Psoas muscle (tissue), 8 donors: ENCODE measurements at regions of chr12 and their contacts with region 1.

Region 1: DNA sequence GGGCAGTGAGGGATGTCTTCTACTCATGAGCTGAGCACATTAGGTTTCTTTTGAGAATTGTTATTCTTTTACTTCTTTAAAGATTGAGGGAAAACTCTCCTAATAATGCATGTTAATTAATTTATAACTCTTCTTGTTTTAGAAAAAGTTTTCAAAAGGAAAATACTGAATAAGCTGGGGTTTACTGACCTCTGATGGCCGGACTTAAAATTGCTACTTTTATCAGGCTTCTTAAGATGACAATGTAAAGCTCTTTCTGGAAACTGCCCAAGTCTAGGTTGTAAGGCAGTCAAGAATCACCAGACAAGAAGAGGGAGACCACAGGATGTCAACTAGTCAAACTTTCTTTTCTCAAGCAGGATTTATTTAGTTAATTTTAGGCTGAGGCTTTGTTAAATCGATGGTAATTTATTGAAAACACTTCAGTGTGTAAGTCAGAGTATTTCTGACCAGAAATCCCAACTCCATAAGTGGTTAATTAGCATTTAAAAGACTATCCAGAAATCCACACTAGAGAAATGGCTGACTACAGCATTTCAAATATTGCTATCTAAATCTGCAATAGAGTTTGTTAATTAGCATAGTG is 82.1 kb downstream of the AVPR1A start:
- DNase-seq: no peak
- ATAC-seq: no peak
- H3K4me3 ChIP-seq: no peak overlapping the region
- H3K27ac ChIP-seq: no peak overlapping the region
- H3K4me1 ChIP-seq: no peaks in the 10 kb centered on the region
- H3K27me3 ChIP-seq: peaks cover 0 to 2% (median 0%) of the 10 kb centered on the region in 3 donors
- CTCF ChIP-seq: peak; percentile 27

Region 2: GRCh38 chr12:62772416-62772955 is 296.5 kb before region 1 on chr12:
- intact Hi-C with region 1: no loop called
- DNase-seq: no peak
- ATAC-seq: no peak
- H3K4me3 ChIP-seq: no peak overlapping the region
- H3K27ac ChIP-seq: no peak overlapping the region
- H3K4me1 ChIP-seq: no peaks in the 10 kb centered on the region
- H3K27me3 ChIP-seq: no peaks in the 10 kb centered on the region
- CTCF ChIP-seq: no peak

Region 3: GRCh38 chr12:62813031-62813829 is 255.7 kb before region 1 on chr12:
- intact Hi-C with region 1: loop called in 1 of 2 experiments (anchors 5 kb)
- DNase-seq: peak; percentile 54 to 62
- ATAC-seq: peak in 3 of 4 donors; percentile 62 to 81 (median 73)
- H3K4me3 ChIP-seq: peak overlapping the region; percentile 26
- H3K27ac ChIP-seq: no peak overlapping the region
- H3K4me1 ChIP-seq: no peaks in the 10 kb centered on the region
- H3K27me3 ChIP-seq: no peaks in the 10 kb centered on the region
- CTCF ChIP-seq: peak; percentile 57

Region 4: GRCh38 chr12:63151623-63152320 is 82.8 kb after region 1 on chr12:
- intact Hi-C with region 1: no loop called
- DNase-seq: no peak
- ATAC-seq: peak in 2 of 4 donors; percentile 34 to 46
- H3K4me3 ChIP-seq: peak overlapping the region; percentile 64
- H3K27ac ChIP-seq: no peak overlapping the region
- H3K4me1 ChIP-seq: peaks cover 4% of the 10 kb centered on the region
- H3K27me3 ChIP-seq: peaks cover 0 to 55% (median 18%) of the 10 kb centered on the region in 3 donors
- CTCF ChIP-seq: peak; percentile 39

Region 5: GRCh38 chr12:63196168-63196567 is 127.2 kb after region 1 on chr12:
- intact Hi-C with region 1: no loop called
- DNase-seq: no peak
- ATAC-seq: no peak
- H3K4me3 ChIP-seq: no peak overlapping the region
- H3K27ac ChIP-seq: no peak overlapping the region
- H3K4me1 ChIP-seq: no peaks in the 10 kb centered on the region
- H3K27me3 ChIP-seq: peaks cover 0 to 2% (median 0%) of the 10 kb centered on the region in 3 donors
- CTCF ChIP-seq: no peak

Region 6: GRCh38 chr12:63212316-63212715 is 143.4 kb after region 1 on chr12:
- intact Hi-C with region 1: no loop called
- DNase-seq: no peak
- ATAC-seq: no peak
- H3K4me3 ChIP-seq: no peak overlapping the region
- H3K27ac ChIP-seq: no peak overlapping the region
- H3K4me1 ChIP-seq: no peaks in the 10 kb centered on the region
- H3K27me3 ChIP-seq: no peaks in the 10 kb centered on the region
- CTCF ChIP-seq: no peak